Dorsolateral prefrontal cortex (tissue), 120 donors: ENCODE measurements at regions of chr20 and their contacts with region 1.

Region 1: GRCh38 chr20:35741892-35742740 is at the start of gene RBM39:
- DNase-seq: peak; percentile 96 to 100 (median 99)
- H3K4me3 ChIP-seq: peak within 1 kb of the TSS; percentile 60 to 100 (median 91)
- H3K27ac ChIP-seq: peak within 1 kb of the TSS; percentile 94 to 100 (median 100)
- H3K27me3 ChIP-seq: no peaks in the 10 kb centered on the region
- CTCF ChIP-seq: peak; percentile 21 to 80 (median 63)
- total RNA-seq, gene RBM39: 252 to 391 (median 313) TPM

Region 2: GRCh38 chr20:35664544-35665221 is 77.4 kb before region 1 on chr20 and contains the starts of genes CPNE1 and RBM12:
- intact Hi-C with region 1: loop called in 1 of 2 experiments (anchors 2 kb)
- DNase-seq: peak; percentile 85 to 95 (median 90)
- H3K4me3 ChIP-seq: peak within 1 kb of the TSS; percentile 66 to 99 (median 91)
- H3K27ac ChIP-seq: peak within 1 kb of the TSS; percentile 88 to 100 (median 98)
- H3K27me3 ChIP-seq: no peaks in the 10 kb centered on the region
- CTCF ChIP-seq: peak in 33 of 56 donors; percentile 3 to 55 (median 31)
- total RNA-seq, gene CPNE1: 65.9 to 194 (median 135) TPM
- total RNA-seq, gene RBM12: 48.7 to 99.3 (median 72.3) TPM

Region 3: DNA sequence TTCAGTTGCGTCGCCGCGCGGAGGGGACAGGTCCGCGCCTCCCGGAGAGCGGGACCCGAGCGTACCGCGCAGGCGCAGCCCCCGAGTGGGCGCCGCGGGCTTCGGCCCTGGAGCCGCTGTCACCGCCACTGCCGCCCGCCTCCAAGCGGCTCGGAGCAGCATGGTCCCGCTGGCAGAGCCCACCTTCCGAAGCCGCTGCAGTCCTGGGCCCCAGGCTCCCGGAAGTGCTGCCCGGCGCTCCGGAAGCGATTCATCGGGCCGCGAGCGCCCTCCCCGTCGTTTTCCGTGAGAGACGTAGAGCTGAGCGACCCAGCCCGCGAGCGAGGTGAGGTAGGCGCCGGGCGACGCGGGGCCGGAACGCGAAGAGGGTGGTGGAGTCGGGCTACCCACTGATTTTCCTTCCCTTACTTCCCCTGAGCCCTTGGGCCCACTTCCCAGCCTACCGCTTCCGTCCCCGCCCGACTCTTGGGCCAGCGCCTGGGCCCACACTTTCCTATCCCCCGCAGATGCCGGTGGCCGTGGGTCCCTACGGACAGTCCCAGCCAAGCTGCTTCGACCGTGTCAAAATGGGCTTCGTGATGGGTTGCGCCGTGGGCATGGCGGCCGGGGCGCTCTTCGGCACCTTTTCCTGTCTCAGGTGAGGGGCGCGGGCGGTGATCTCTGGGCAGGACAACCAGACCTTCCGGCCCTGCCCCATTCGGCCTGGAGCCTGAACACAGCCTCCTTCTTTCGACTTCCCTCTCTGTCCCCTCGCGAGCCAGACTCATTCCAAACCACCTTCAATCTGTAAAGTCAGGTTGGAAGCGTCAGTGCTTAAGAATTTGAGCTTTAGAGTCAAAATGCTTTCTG is 42.8 kb before region 1 on chr20 and contains the starts of genes NFS1 and ROMO1:
- intact Hi-C with region 1: loop called (anchors 2 to 5 kb)
- DNase-seq: peak; percentile 76 to 92 (median 86)
- H3K4me3 ChIP-seq: peak within 1 kb of the TSS; percentile 71 to 100 (median 94)
- H3K27ac ChIP-seq: peak within 1 kb of the TSS; percentile 25 to 92 (median 83)
- H3K27me3 ChIP-seq: no peaks in the 10 kb centered on the region
- CTCF ChIP-seq: peak in 55 of 56 donors; percentile 16 to 73 (median 54)
- total RNA-seq, gene NFS1: 39.8 to 78.0 (median 57.4) TPM
- total RNA-seq, gene ROMO1: 28.9 to 82.8 (median 51.8) TPM

Region 4: GRCh38 chr20:35771689-35772562 is 29.8 kb after region 1 on chr20 and contains the start of gene PHF20:
- intact Hi-C with region 1: loop called (anchors 1 kb)
- DNase-seq: peak; percentile 99 to 100 (median 99)
- H3K4me3 ChIP-seq: peak within 1 kb of the TSS; percentile 59 to 92 (median 81)
- H3K27ac ChIP-seq: peak within 1 kb of the TSS; percentile 79 to 99 (median 94)
- H3K27me3 ChIP-seq: no peaks in the 10 kb centered on the region
- CTCF ChIP-seq: peak in 4 of 56 donors; percentile 3 to 20 (median 11)
- total RNA-seq, gene PHF20: 57.3 to 113 (median 73.3) TPM

Region 5: DNA sequence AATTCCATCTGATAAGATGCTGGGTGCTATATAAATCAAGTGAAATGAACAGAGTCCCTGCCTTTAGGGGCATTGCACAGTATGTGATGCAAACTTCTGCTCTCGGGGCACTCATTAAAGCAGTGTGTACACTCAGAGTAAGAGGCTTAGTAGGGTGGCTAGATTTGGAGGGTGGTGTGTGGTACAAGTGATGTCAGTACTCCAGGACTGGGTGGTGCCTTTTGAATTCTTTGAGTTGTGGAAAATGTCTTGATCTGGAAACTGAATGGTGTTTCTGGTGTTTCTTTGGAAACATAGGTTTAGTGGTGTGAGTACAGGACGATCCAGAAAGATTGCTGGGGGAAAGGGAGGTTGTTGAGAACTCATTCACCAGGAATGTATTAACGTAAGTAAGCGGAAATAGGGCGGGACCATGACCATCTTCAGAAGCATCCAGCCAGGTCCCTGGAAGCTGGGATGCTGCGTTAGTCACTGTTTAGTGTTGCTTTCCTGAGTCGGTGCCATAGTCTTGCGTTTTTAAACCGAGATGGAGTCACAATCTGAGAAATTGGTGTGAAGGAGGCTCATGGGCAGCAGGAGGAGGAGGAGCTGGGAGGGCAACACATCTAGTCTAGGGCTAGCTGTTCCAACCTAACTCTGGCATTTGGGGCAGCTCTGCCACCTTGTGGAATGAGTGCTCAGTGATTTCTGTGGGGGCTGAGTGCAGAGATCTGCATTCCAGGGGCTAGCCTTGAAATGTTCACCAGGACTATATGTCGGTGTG is 141.8 kb after region 1 on chr20:
- intact Hi-C with region 1: loop called (anchors 5 to 10 kb)
- DNase-seq: peak; percentile 53 to 81 (median 78)
- H3K4me3 ChIP-seq: peak overlapping the region in 10 of 59 donors; percentile 9 to 33 (median 18)
- H3K27ac ChIP-seq: peak overlapping the region in 18 of 59 donors; percentile 3 to 57 (median 30)
- H3K27me3 ChIP-seq: no peaks in the 10 kb centered on the region
- CTCF ChIP-seq: peak; percentile 54 to 90 (median 80)

Region 6: GRCh38 chr20:35954200-35954906 is 212.2 kb after region 1 on chr20 and contains the start of gene SCAND1:
- intact Hi-C with region 1: loop called (anchors 2 kb)
- DNase-seq: peak; percentile 87 to 97 (median 95)
- H3K4me3 ChIP-seq: peak within 1 kb of the TSS; percentile 69 to 100 (median 95)
- H3K27ac ChIP-seq: peak within 1 kb of the TSS; percentile 84 to 100 (median 96)
- H3K27me3 ChIP-seq: no peaks in the 10 kb centered on the region
- CTCF ChIP-seq: peak; percentile 88 to 100 (median 99)
- total RNA-seq, gene SCAND1: 20.1 to 63.9 (median 44.4) TPM

Region 7: GRCh38 chr20:36632487-36633284 is 890.6 kb after region 1 on chr20:
- intact Hi-C with region 1: no loop called
- DNase-seq: no peak
- H3K4me3 ChIP-seq: no peak overlapping the region
- H3K27ac ChIP-seq: no peak overlapping the region
- H3K27me3 ChIP-seq: no peaks in the 10 kb centered on the region
- CTCF ChIP-seq: no peak